ENCODE measurements at regions of chr13 and their contacts with region 1.

Region 1: DNA sequence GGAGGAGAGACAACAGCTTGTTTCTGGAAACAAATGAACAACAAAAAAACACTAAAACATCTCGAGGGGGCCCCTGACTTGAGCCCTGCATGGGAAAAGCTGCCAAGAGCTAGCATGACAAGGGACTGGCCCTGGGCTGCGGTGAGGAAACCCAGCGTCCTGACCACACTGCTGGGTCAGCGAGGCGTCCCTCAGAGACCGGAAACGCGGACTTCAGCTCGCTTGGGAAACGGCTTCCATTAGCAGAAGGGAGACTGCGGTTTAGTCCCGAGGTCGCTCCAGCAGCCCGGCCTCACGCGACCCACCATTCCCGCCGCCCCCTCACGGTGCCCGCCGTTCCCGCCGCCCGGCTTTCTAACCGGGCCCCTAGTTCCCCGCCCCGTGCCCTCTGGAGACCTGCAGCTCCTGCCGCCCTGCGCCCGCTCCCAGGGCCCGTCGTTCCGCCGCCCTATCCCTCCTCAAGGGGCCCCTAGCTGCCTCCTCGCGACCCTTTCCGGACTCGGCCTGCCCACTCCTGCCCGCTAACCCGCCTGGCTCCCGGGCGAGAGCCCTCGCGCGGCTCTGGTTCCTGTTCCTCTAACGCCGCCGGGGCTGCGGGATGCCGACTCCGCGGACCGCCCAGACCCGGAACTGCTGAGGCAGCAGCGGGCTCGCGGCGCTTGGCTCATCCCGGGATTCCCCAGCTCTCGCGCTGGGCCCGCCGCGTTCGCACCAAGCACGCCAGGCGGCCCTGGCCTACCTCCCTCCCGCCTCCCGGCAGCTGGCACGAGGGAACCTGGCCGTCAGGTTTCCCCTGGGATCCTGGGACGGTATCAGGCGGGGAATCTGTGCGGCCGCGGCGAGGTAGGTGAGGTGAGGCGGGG is at the start of gene CCDC122:
- DNase-seq: peak; percentile 48 to 72
- ATAC-seq: peak; percentile 83 to 85
- H3K4me3 ChIP-seq: peak within 1 kb of the TSS; percentile 87 to 97 (median 94)
- H3K27ac ChIP-seq: peak within 1 kb of the TSS; percentile 85 to 90 (median 88)
- H3K4me1 ChIP-seq: peaks cover 4 to 6% of the 10 kb centered on the region in 2 donors
- H3K27me3 ChIP-seq: no peaks in the 10 kb centered on the region
- CTCF ChIP-seq: no peak
- POLR2A ChIP-seq: peak; percentile 40 to 56
- total RNA-seq, gene CCDC122: 0.16 to 1.7 (median 1.1) TPM in 3 of 4 donors, not detected in the other

Region 2: GRCh38 chr13:42594970-42595571 is 1284.1 kb before region 1 on chr13:
- in situ Hi-C with region 1: loop called in 3 of 4 experiments (anchors 25 kb)
- intact Hi-C with region 1: no loop called
- DNase-seq: peak; percentile 17 to 29
- ATAC-seq: peak; percentile 54 to 66
- H3K4me3 ChIP-seq: no peak overlapping the region
- H3K27ac ChIP-seq: no peak overlapping the region
- H3K4me1 ChIP-seq: peaks cover 0 to 4% of the 10 kb centered on the region in 2 donors
- H3K27me3 ChIP-seq: no peaks in the 10 kb centered on the region
- CTCF ChIP-seq: peak; percentile 47 to 82 (median 54)
- POLR2A ChIP-seq: no peak

Region 3: GRCh38 chr13:42969558-42970172 is 909.5 kb before region 1 on chr13:
- in situ Hi-C with region 1: loop called in 1 of 4 experiments (anchors 10 kb)
- intact Hi-C with region 1: loop called (anchors 5 kb)
- DNase-seq: peak; percentile 33 to 49
- ATAC-seq: peak; percentile 65 to 82
- H3K4me3 ChIP-seq: no peak overlapping the region
- H3K27ac ChIP-seq: no peak overlapping the region
- H3K4me1 ChIP-seq: no peaks in the 10 kb centered on the region
- H3K27me3 ChIP-seq: no peaks in the 10 kb centered on the region
- CTCF ChIP-seq: peak; percentile 47 to 83 (median 68)
- POLR2A ChIP-seq: no peak

Region 4: GRCh38 chr13:43023289-43023951 is 855.7 kb before region 1 on chr13 and contains the start of gene DNAJC15:
- in situ Hi-C with region 1: no loop called
- intact Hi-C with region 1: loop called (anchors 5 kb)
- DNase-seq: peak; percentile 72 to 83
- ATAC-seq: peak; percentile 93 to 96
- H3K4me3 ChIP-seq: peak within 1 kb of the TSS; percentile 76 to 96 (median 87)
- H3K27ac ChIP-seq: peak within 1 kb of the TSS; percentile 83 to 94 (median 92)
- H3K4me1 ChIP-seq: peaks cover 0 to 22% of the 10 kb centered on the region in 2 donors
- H3K27me3 ChIP-seq: no peaks in the 10 kb centered on the region
- CTCF ChIP-seq: peak in 2 of 5 experiments; percentile 14 to 25
- POLR2A ChIP-seq: peak; percentile 44 to 48
- total RNA-seq, gene DNAJC15: 6.2 to 19.5 (median 12.3) TPM

Region 5: DNA sequence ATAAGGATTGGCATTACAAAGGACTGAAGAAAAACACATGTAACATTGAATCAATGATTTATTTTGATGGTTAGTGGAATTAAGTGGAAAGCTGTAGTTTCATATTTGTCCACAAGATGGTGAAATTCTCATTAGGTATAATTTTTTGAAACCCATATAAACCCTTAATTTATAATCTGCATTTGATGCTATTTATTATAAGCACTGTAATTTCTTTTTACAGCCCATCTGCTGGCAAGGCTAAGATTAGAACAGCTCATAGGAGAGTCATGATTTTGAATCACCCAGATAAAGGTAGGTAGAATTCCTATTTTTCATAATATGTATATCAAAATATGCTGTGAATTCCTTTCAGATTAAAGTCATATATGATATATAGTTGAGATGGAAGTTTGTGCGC is 793.6 kb before region 1 on chr13:
- in situ Hi-C with region 1: no loop called
- intact Hi-C with region 1: loop called (anchors 5 kb)
- DNase-seq: no peak
- ATAC-seq: no peak
- H3K4me3 ChIP-seq: no peak overlapping the region
- H3K27ac ChIP-seq: no peak overlapping the region
- H3K4me1 ChIP-seq: peaks cover 0 to 3% of the 10 kb centered on the region in 2 donors
- H3K27me3 ChIP-seq: no peaks in the 10 kb centered on the region
- CTCF ChIP-seq: peak; percentile 40 to 63 (median 58)
- POLR2A ChIP-seq: no peak